Vagina (tissue), 2 donors: ENCODE measurements at regions of chr5 and their contacts with region 1.

Region 1: DNA sequence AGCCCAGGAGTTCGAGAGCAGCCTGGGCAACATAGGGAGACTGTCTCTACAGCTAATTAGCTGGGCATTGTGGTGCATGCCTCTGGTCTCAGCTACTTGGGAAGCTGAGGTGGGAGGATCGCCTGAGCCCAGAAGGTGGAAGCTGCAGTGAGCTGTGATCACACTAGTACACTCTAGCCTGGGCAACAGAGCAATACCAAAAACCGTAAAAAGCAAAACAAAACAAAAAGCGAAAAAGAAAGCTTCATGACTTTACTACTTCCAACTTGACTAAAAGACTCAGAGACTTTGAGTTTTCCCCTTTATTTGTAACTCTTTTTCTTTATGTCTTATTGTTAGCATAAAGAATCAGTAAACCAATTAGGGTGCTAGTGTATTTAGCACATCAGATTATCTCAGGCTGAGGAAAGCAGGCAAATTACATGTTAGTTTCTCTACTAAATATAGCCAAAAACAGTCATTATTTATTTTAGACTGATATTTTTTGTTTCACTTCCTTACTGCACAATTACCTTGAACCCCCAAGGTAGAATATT is 5.4 kb downstream of the RAD17 start:
- DNase-seq: no peak
- H3K4me3 ChIP-seq: no peak overlapping the region
- H3K27ac ChIP-seq: no peak overlapping the region
- H3K4me1 ChIP-seq: peaks cover 18% of the 10 kb centered on the region
- H3K27me3 ChIP-seq: no peaks in the 10 kb centered on the region
- CTCF ChIP-seq: no peak
- POLR2A ChIP-seq: no peak

Region 2: DNA sequence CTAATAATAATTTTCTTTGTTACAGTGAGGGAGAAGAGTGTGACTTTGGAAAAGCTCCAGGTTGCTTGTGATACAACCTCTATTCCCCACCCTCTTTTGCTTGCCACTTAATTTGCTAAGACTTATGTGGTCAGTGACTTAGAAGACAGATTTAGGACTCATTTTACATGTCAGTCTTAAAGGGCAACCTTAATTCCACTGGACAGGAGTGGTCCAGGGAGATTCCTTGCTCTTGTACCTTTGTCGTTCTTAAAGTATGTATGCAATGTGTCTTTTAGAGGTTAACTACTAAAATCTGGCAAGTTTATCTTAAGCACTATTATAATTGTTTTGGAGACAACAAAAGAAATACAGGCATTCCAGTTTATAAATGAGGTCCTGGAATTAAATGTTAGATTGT is 261.1 kb before region 1 on chr5:
- intact Hi-C with region 1: loop called (anchors 10 kb)
- DNase-seq: no peak
- H3K4me3 ChIP-seq: no peak overlapping the region
- H3K27ac ChIP-seq: no peak overlapping the region
- H3K4me1 ChIP-seq: no peaks in the 10 kb centered on the region
- H3K27me3 ChIP-seq: no peaks in the 10 kb centered on the region
- CTCF ChIP-seq: no peak
- POLR2A ChIP-seq: no peak